Endothelial cell of umbilical vein (primary cell): ENCODE measurements at regions of chr3 and their contacts with region 1.

Region 1: DNA sequence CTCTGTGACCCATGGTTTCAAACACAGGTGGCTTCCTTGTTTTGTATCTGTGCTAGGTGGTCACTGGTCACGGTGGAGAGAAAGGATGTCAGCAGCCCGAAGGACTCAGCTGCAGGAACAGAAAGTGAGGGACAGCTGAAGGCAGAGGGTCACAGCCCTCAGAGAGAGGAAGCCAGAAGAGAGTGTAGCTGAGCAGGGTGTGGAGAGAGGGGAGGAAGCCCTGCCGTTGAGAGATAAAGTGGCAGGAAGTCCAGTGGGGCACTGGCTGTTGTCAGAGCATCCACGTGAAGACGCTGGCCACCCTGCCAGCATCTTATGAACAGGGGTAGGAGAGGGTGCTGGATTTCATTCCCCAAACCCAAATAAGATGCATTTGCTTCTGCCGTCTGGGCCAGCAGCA is 36.9 kb downstream of the LIMD1 start:
- DNase-seq: peak; percentile 81
- H3K4me3 ChIP-seq: peak overlapping the region in 1 of 3 experiments; percentile 27
- H3K27ac ChIP-seq: peak overlapping the region; percentile 78
- H3K4me1 ChIP-seq: peaks cover 19% of the 10 kb centered on the region
- H3K27me3 ChIP-seq: no peaks in the 10 kb centered on the region
- CTCF ChIP-seq: no peak
- POLR2A ChIP-seq: no peak

Region 2: DNA sequence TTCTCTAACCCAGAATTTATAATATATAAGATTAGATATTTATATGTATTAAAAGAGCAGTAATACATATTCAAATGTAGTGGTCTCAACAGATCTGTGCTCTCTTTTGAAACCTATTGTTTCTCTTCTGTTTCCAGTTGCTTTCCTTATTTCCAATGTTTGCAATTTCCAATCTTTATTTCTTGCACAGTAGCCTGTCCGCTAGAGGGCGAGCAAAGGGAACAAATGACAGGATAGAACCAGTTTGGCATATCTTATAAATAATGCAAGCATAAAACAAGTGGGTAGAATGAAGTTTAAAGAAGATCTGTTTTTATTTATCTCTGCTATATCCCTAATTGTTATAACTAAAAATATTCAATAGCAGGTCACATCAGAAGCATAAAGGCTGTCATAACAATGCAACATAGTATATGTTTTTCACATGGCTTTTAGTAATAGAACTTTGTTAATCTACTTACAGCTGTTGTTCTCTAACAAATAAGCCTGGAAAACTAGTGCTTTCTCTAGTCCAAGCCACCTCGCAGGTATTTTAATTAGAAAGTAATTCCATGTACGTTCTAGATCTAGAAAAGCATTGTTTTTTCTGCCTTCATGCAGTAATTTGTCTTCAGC is 1308.0 kb before region 1 on chr3:
- CTCF ChIA-PET with region 1: no interaction called
- POLR2A ChIA-PET with region 1: no interaction called
- dilution Hi-C with region 1: no loop called
- intact Hi-C with region 1: no loop called
- DNase-seq: peak; percentile 80
- H3K4me3 ChIP-seq: no peak overlapping the region
- H3K27ac ChIP-seq: no peak overlapping the region
- H3K4me1 ChIP-seq: no peaks in the 10 kb centered on the region
- H3K27me3 ChIP-seq: peaks cover 0 to 3% of the 10 kb centered on the region in 2 experiments
- CTCF ChIP-seq: peak; percentile 63 to 65
- POLR2A ChIP-seq: no peak

Region 3: DNA sequence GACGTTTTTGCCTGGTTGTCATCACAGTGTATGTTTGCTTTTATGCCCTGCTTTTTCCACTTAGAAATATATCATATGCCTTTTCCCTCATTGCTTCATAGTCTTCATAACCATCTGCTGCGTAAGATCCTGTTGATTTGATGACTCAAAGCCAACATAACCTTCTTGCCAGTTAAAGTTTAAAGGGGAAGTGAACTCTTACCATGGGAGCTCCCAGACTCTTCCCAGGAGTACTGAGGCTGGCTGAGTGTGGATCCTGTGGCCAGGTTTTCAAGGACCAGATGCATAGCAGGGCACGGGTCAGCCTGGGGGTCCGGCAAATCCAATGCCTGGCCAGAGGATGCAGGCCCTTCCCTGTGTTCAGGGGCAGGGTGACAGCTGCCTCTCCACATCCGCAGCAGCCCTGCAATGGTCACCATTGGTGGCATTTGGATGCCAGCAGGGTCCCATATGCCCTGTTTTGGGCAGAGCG is 15.7 kb after region 1 on chr3:
- CTCF ChIA-PET with region 1: interaction called, 9 read pairs
- POLR2A ChIA-PET with region 1: no interaction called
- dilution Hi-C with region 1: no loop called
- intact Hi-C with region 1: loop called (anchors 1 kb)
- DNase-seq: peak; percentile 92
- H3K4me3 ChIP-seq: no peak overlapping the region
- H3K27ac ChIP-seq: peak overlapping the region; percentile 89
- H3K4me1 ChIP-seq: peaks cover 57% of the 10 kb centered on the region
- H3K27me3 ChIP-seq: no peaks in the 10 kb centered on the region
- CTCF ChIP-seq: no peak
- POLR2A ChIP-seq: peak; percentile 49

Region 4: GRCh38 chr3:45666757-45667431 is 35.4 kb after region 1 on chr3:
- CTCF ChIA-PET with region 1: no interaction called
- POLR2A ChIA-PET with region 1: no interaction called
- dilution Hi-C with region 1: no loop called
- intact Hi-C with region 1: no loop called
- DNase-seq: peak; percentile 41
- H3K4me3 ChIP-seq: no peak overlapping the region
- H3K27ac ChIP-seq: peak overlapping the region; percentile 84
- H3K4me1 ChIP-seq: peaks cover 49% of the 10 kb centered on the region
- H3K27me3 ChIP-seq: no peaks in the 10 kb centered on the region
- CTCF ChIP-seq: no peak
- POLR2A ChIP-seq: no peak